Posterior cingulate gyrus (tissue), 11 donors: ENCODE measurements at regions of chr12 and their contacts with region 1.

Region 1: DNA sequence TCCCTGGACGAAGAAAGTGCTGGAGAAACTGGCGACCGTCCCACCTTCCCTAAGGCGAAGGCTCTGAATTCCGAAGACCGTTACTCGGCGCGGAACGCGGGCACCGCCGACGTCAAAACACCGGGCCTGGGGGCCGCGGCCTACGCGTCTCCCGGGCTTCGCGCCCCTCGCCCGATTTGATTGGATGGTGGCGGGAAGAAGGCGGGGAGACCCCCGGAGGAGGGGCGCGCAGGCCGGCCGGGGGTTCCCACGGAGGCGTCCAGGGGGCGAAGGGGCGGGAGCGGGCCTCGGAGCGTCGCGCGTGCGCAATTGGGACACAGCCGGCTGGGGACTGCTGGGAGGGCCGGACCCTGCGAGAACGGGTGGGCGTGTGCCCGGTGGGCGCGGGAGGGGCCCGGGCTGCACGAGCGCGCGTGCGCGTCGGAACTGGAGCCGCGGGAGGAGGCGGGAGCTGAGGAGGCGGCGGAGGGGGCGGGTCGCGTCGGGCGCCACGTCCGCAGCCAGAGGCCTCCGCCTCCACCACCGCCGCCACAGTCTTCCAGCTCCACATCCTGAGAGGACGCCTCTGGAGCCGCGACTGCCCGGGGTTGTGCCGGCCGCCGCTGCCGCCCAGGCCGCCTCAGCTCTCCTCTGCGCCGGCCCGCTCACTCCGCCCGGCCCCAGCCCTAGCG is at the start of gene TMEM263:
- DNase-seq: peak; percentile 77 to 98 (median 88)

Region 2: DNA sequence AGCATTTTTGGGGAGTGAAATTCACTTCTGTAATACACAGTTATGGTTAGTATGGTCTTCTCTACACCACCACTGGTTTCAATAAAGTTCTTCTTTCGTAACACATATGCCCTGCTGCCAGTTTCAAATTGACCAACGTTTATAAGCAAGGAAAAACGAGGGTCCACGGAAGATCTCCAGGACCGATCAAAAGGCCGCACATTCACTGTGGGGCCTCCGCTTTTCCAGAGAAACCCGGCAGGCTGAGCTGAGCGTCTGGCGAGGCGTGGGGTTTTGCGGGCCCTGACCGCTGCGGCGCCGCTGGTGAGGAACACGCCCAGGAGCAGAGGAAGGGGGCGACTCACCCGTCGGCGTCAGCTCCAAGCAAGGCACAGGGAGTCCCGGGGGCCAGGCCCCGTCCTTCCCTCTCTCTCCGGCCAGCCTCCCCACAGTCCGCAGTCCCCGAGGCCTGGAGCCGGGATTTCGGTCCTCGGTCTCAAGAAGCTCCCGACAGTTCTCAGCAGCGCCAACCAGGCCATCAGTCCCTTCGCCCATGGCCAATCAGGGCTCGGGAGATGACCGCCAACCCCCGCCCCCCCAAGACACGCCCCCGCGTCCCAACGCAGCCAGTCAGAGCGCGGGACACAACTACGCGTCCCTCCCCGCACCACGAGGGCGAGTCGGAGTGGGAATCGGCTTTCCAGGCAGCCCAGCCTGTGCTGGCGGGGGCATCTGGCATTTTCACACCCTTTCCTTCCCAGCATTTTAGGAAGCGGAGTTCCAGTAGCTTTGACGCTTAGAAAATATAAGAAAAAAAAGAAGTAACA is 31.3 kb after region 1 on chr12 and contains the start of gene MTERF2:
- intact Hi-C with region 1: loop called (anchors 1 kb)
- DNase-seq: peak; percentile 87 to 99 (median 94)

Region 3: DNA sequence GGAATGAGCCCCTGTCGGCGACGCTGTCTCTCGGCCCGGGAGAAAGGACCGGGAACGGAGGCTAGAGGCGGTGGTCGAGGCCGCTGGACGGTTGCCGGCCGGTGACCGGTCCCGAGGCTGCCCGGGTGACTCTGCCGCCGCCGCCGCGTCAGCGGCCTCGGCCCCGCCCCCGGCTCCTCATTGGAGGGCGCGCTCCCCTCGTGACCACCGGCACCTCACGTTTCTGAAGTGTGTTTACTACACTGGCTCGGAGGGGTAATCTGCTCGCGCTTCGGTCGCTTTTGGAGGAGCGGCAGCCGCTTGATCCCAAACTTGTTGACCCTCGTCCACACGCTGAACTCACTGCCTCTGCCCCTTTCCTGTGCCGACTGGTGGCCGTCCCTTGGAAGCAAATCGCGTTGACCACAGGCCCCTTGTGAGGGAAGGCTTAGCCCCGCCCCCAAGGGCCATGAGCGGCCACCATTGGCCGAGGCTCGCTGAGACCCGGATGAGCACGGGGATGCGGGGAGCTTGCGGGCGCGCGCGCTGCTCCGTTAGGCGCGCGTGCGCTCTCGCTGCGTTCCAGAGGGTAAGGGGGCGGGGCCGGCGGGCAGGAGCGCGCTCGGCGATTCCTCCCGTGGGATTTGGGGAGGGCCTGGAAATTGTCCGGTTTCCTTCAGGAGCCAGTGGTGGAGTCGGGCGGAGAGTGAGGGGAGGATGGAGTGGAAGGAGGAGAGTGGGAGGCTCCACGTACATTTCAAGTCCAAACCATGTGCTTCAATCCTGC is 138.1 kb after region 1 on chr12 and contains the start of gene CRY1:
- intact Hi-C with region 1: loop called (anchors 5 kb)
- DNase-seq: peak; percentile 90 to 99 (median 95)

Region 4: GRCh38 chr12:107169200-107169599 is 213.7 kb after region 1 on chr12:
- intact Hi-C with region 1: no loop called
- DNase-seq: no peak